ENCODE measurements at regions of chr4 and their contacts with region 1.

Region 1: DNA sequence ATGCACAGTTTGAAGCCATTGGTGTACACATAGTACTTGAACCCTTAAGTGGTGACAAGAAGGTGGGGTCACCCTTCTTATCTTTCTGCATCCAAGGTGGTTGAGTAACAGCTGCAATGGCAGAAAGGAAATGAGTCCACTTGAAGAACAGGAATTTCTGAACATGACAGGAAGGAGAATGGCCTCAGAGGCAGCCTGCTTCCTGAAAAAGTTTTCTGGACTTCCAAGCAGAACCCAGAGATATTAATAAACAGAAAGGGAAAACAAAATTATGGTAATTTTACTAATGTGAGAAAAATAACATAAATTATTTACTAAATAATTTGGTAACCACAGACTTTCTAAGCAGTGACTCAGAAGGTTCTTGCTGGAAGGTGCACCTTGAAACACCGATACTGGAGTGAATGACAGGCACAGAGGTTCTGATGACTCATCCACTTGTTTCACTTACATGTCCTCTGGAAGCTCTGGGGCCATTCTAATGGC is 119.9 kb upstream of the HS3ST1 start:
- DNase-seq: no peak
- H3K4me3 ChIP-seq: no peak overlapping the region
- H3K4me3 Mint-ChIP-seq: no peak overlapping the region
- H3K27ac Mint-ChIP-seq: no peak overlapping the region
- H3K4me1 ChIP-seq: no peaks in the 10 kb centered on the region
- H3K4me1 Mint-ChIP-seq: no peaks in the 10 kb centered on the region
- H3K27me3 ChIP-seq: no peaks in the 10 kb centered on the region
- H3K27me3 Mint-ChIP-seq: peaks cover 3% of the 10 kb centered on the region
- CTCF ChIP-seq: no peak

Region 2: DNA sequence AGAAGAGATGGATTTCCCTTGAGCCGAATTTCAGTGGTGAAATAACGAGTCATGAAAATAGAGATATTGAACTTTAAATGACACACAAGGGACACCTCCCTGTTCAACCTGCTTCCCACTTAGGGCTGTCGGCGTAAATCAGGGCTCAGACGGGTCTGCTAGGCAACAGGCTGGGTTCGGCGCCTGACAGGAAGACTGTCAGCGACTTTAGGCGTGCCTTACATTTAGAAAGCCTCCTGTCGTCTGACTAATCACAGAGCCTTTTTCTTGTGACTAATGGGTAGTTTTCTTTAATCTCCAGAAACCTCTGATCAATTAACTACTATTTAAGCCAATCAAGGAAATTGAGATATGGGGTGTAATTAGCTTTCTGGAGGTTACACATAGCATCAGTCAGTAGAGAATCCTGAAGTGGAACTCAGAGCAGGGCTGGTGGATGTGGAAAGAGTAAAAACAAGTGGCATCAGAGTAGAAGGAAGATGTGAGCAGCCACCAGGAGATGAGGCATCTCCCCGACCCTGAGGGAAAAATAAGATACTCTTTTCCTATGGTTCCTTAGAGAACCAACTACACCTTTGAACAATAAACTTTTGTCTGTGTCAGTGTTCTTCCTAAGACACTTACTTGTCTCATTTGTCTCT is 33.7 kb before region 1 on chr4:
- CTCF ChIA-PET with region 1: no interaction called
- POLR2A ChIA-PET with region 1: no interaction called
- intact Hi-C with region 1: loop called (anchors 1 kb)
- DNase-seq: no peak
- H3K4me3 ChIP-seq: no peak overlapping the region
- H3K4me3 Mint-ChIP-seq: no peak overlapping the region
- H3K27ac Mint-ChIP-seq: no peak overlapping the region
- H3K4me1 ChIP-seq: no peaks in the 10 kb centered on the region
- H3K4me1 Mint-ChIP-seq: peaks cover 10% of the 10 kb centered on the region
- H3K27me3 ChIP-seq: no peaks in the 10 kb centered on the region
- H3K27me3 Mint-ChIP-seq: peaks cover 12% of the 10 kb centered on the region
- CTCF ChIP-seq: no peak

Measured in Caco-2 (cell line).